Activated CD4-positive, alpha-beta T cell treated with anti-CD3 and anti-CD28 coated beads for 36 hours (primary cell): ENCODE measurements at regions of chr6 and their contacts with region 1.

Region 1: GRCh38 chr6:137823826-137824555 is 43.1 kb upstream of the TNFAIP3 start:
- DNase-seq: peak; percentile 82
- ATAC-seq: peak; percentile 48
- H3K4me3 Mint-ChIP-seq: peak overlapping the region; percentile 58
- H3K27ac Mint-ChIP-seq: peak overlapping the region; percentile 93
- H3K4me1 Mint-ChIP-seq: peaks cover 86% of the 10 kb centered on the region
- H3K27me3 Mint-ChIP-seq: no peaks in the 10 kb centered on the region

Region 2: DNA sequence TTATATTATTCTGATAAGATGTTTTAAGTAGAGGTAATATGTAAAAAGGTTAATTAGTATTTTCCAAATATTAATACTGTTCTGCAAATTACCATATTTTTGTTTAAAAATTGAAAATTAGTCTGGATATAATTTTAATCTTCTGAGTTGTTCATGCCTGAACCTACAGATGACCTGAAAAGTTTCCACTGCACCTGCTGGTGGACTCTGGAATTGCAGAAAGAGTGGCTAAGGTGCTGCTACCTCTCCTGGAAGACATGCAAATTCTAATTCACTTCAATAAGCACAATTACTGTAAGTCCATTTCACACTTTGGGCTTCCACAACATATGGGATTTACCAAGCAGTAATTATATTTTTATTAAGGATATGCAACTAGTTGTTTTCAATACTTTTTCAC is 252.1 kb before region 1 on chr6:
- CTCF ChIA-PET with region 1: no interaction called
- POLR2A ChIA-PET with region 1: no interaction called
- intact Hi-C with region 1: no loop called
- DNase-seq: peak; percentile 77
- ATAC-seq: peak; percentile 44
- H3K4me3 Mint-ChIP-seq: no peak overlapping the region
- H3K27ac Mint-ChIP-seq: no peak overlapping the region
- H3K4me1 Mint-ChIP-seq: no peaks in the 10 kb centered on the region
- H3K27me3 Mint-ChIP-seq: peaks cover 4% of the 10 kb centered on the region

Region 3: GRCh38 chr6:137791281-137792159 is 32.5 kb before region 1 on chr6:
- CTCF ChIA-PET with region 1: no interaction called
- POLR2A ChIA-PET with region 1: no interaction called
- intact Hi-C with region 1: loop called in 1 of 2 experiments (anchors 2 kb)
- DNase-seq: no peak
- ATAC-seq: peak; percentile 31
- H3K4me3 Mint-ChIP-seq: peak overlapping the region; percentile 47
- H3K27ac Mint-ChIP-seq: peak overlapping the region; percentile 77
- H3K4me1 Mint-ChIP-seq: peaks cover 55% of the 10 kb centered on the region
- H3K27me3 Mint-ChIP-seq: no peaks in the 10 kb centered on the region

Region 4: GRCh38 chr6:137799950-137800568 is 23.9 kb before region 1 on chr6:
- CTCF ChIA-PET with region 1: interaction called, 22 read pairs
- POLR2A ChIA-PET with region 1: interaction called, 3 read pairs
- intact Hi-C with region 1: no loop called
- DNase-seq: peak; percentile 76
- ATAC-seq: peak; percentile 80
- H3K4me3 Mint-ChIP-seq: no peak overlapping the region
- H3K27ac Mint-ChIP-seq: peak overlapping the region; percentile 84
- H3K4me1 Mint-ChIP-seq: peaks cover 65% of the 10 kb centered on the region
- H3K27me3 Mint-ChIP-seq: no peaks in the 10 kb centered on the region

Region 5: GRCh38 chr6:137811121-137811915 is 12.7 kb before region 1 on chr6:
- CTCF ChIA-PET with region 1: interaction called, 13 read pairs
- POLR2A ChIA-PET with region 1: interaction called, 7 read pairs
- intact Hi-C with region 1: loop called (anchors 1 kb)
- DNase-seq: peak; percentile 91
- ATAC-seq: peak; percentile 93
- H3K4me3 Mint-ChIP-seq: peak overlapping the region; percentile 55
- H3K27ac Mint-ChIP-seq: peak overlapping the region; percentile 83
- H3K4me1 Mint-ChIP-seq: peaks cover 79% of the 10 kb centered on the region
- H3K27me3 Mint-ChIP-seq: no peaks in the 10 kb centered on the region

Region 6: GRCh38 chr6:137849181-137849980 is 25.4 kb after region 1 on chr6:
- CTCF ChIA-PET with region 1: interaction called, 5 read pairs
- POLR2A ChIA-PET with region 1: interaction called, 3 read pairs
- intact Hi-C with region 1: loop called in 1 of 2 experiments (anchors 1 kb)
- DNase-seq: peak; percentile 70
- ATAC-seq: peak; percentile 91
- H3K4me3 Mint-ChIP-seq: no peak overlapping the region
- H3K27ac Mint-ChIP-seq: peak overlapping the region; percentile 17
- H3K4me1 Mint-ChIP-seq: peaks cover 41% of the 10 kb centered on the region
- H3K27me3 Mint-ChIP-seq: no peaks in the 10 kb centered on the region

Region 7: GRCh38 chr6:137903933-137904821 is 80.2 kb after region 1 on chr6:
- CTCF ChIA-PET with region 1: no interaction called
- POLR2A ChIA-PET with region 1: no interaction called
- intact Hi-C with region 1: loop called in 1 of 2 experiments (anchors 2 kb)
- DNase-seq: peak; percentile 75
- ATAC-seq: peak; percentile 85
- H3K4me3 Mint-ChIP-seq: peak overlapping the region; percentile 69
- H3K27ac Mint-ChIP-seq: peak overlapping the region; percentile 98
- H3K4me1 Mint-ChIP-seq: peaks cover 62% of the 10 kb centered on the region
- H3K27me3 Mint-ChIP-seq: no peaks in the 10 kb centered on the region

Region 8: DNA sequence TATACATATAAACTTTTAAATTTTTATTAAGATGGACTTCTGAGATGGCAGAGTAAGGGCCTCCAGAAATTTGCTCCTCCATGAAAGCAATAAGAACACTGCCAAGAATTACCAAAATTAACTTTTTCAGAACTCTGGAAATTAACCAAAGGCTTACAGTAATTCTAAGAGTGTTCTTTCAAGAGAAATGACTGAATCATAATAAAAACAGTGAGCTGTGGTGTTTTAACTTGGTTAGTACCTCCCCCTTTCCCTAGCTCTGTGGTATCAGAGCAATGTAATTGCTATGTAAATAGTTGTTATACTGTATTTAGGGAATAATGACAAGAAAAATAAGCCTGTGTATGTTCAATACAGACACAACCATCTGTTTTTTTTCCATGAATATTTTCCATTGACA is 1329.9 kb after region 1 on chr6:
- CTCF ChIA-PET with region 1: no interaction called
- POLR2A ChIA-PET with region 1: no interaction called
- intact Hi-C with region 1: loop called in 1 of 2 experiments (anchors 5 kb)
- DNase-seq: no peak
- ATAC-seq: peak; percentile 47
- H3K4me3 Mint-ChIP-seq: peak overlapping the region; percentile 30
- H3K27ac Mint-ChIP-seq: peak overlapping the region; percentile 100
- H3K4me1 Mint-ChIP-seq: peaks cover 82% of the 10 kb centered on the region
- H3K27me3 Mint-ChIP-seq: no peaks in the 10 kb centered on the region